Right ventricle myocardium inferior (tissue), 1 donor: ENCODE measurements at regions of chr17 and their contacts with region 1.

Region 1: GRCh38 chr17:73759734-73760438 is 115.6 kb upstream of the SDK2 start:
- DNase-seq: no peak
- ATAC-seq: peak; percentile 18

Region 2: GRCh38 chr17:73657473-73658116 is 102.3 kb before region 1 on chr17:
- intact Hi-C with region 1: no loop called
- DNase-seq: peak; percentile 76
- ATAC-seq: peak; percentile 57

Region 3: DNA sequence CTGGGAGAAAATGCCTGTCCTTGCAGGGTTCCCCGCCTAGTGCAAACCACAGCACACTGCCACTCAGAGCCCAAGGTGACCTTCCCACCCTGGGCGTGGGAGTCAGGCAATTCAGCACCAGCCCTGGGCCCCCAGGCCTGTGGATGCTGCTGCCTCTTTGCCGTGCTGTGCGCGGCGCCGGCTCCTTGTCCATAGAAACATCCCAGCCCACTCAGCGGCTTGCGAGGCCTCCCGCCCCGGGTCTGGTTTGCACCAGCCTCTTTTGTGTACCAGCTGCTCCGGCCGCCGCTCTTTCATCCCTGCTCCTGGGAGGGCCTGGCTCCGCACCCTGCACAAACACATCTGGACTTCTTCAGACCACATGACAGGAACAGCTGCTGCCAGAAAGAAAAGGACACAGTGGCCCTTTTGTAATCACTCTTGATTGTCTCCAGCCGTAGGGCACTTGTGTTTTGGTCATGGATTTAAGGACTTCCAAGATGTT is 40.3 kb before region 1 on chr17:
- intact Hi-C with region 1: loop called (anchors 5 kb)
- DNase-seq: no peak
- ATAC-seq: peak; percentile 83